ENCODE measurements at regions of chr18 and their contacts with region 1.

Region 1: DNA sequence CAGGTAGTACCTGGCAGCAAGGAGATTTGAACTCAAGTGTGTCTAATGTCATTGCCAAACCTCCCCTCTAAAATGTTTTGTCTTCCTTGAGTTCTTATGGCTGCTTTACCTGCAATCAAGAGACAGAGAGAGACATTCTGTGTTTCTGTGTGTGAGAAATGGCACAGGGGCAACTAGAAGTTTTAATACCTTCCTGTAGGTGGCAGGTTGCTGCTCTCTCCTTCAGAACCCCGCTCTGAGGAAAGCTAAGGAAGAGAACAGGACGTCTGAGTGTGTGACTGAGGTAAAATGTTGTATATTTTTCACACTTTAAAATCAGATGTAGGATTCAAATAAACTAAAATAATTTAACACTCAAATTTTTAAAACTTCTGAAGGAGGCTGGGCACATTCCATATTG is 19.2 kb downstream of the DTNA start:
- DNase-seq: peak; percentile 40
- H3K4me3 ChIP-seq: no peak overlapping the region
- H3K27ac ChIP-seq: no peak overlapping the region
- H3K4me1 ChIP-seq: no peaks in the 10 kb centered on the region
- H3K27me3 ChIP-seq: no peaks in the 10 kb centered on the region
- CTCF ChIP-seq: peak; percentile 72 to 85

Region 2: GRCh38 chr18:34773961-34774766 is 44.9 kb after region 1 on chr18:
- CTCF ChIA-PET with region 1: no interaction called
- dilution Hi-C with region 1: no loop called
- in situ Hi-C with region 1: no loop called
- intact Hi-C with region 1: loop called (anchors 5 kb)
- DNase-seq: peak; percentile 43
- H3K4me3 ChIP-seq: no peak overlapping the region
- H3K27ac ChIP-seq: no peak overlapping the region
- H3K4me1 ChIP-seq: peaks cover 18% of the 10 kb centered on the region
- H3K27me3 ChIP-seq: no peaks in the 10 kb centered on the region
- CTCF ChIP-seq: no peak